A673 (cell line): ENCODE measurements at regions of chr6 and their contacts with region 1.

Region 1: GRCh38 chr6:30678964-30679726 is 6.3 kb upstream of the DHX16 start:
- DNase-seq: peak; percentile 89
- H3K4me3 ChIP-seq: no peak overlapping the region
- H3K27ac ChIP-seq: peak overlapping the region; percentile 43
- H3K4me1 ChIP-seq: peaks cover 23% of the 10 kb centered on the region
- H3K27me3 ChIP-seq: no peaks in the 10 kb centered on the region
- CTCF ChIP-seq: peak; percentile 97

Region 2: GRCh38 chr6:29447670-29448069 is 1231.5 kb before region 1 on chr6:
- CTCF ChIA-PET with region 1: no interaction called
- POLR2A ChIA-PET with region 1: no interaction called
- intact Hi-C with region 1: no loop called
- DNase-seq: peak; percentile 13
- H3K4me3 ChIP-seq: no peak overlapping the region
- H3K27ac ChIP-seq: no peak overlapping the region
- H3K4me1 ChIP-seq: no peaks in the 10 kb centered on the region
- H3K27me3 ChIP-seq: peaks cover 16% of the 10 kb centered on the region
- CTCF ChIP-seq: no peak

Region 3: GRCh38 chr6:30583921-30584320 is 95.2 kb before region 1 on chr6:
- CTCF ChIA-PET with region 1: no interaction called
- POLR2A ChIA-PET with region 1: no interaction called
- intact Hi-C with region 1: no loop called
- DNase-seq: no peak
- H3K4me3 ChIP-seq: no peak overlapping the region
- H3K27ac ChIP-seq: no peak overlapping the region
- H3K4me1 ChIP-seq: no peaks in the 10 kb centered on the region
- H3K27me3 ChIP-seq: no peaks in the 10 kb centered on the region
- CTCF ChIP-seq: no peak

Region 4: DNA sequence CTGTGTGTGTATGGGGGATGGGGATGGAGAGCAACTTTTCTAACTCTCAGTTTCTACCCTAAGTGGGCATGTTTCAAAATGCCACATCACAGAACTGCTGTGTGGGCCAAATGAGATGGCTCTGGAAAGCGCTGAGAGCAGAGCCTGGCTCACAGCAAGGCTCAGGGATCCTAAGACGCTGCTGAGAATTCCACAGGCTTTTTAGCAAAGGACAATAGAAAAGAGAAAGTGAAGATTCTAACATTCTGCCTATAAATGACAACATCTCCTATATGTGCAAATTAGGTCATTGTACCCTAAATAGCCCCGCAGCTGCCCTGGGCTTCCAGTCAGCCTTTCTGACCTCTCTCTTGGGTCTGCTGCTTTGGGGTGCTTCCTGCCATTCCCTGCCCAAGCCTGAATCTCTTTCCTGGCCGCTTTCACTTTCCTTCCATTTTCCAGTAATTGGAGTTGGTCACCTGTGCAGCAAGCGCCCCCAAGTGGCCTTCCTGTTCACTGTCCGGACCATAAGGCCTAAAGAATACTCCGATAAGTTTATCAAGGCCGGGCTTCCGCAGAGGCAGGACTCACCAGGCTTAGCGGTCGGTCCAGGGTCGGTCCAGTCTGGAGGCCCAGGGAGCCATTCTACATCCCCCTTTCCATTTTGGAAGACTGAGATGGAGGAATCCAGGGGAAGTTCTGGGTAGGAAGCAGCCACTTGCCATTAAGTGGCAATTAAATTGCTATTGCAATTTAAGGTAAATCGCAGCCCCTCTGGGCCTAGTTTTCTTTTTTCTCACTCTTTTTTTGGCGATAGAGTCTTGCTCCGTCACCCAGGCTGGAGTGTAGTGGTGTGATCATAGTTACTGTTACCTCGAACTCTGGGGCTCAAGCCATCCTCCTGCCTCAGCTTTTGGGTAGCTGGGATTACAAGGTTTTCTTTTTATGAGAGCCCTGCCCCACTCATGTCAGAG is 198.6 kb after region 1 on chr6:
- CTCF ChIA-PET with region 1: no interaction called
- POLR2A ChIA-PET with region 1: no interaction called
- intact Hi-C with region 1: loop called (anchors 1 kb)
- DNase-seq: peak; percentile 88
- H3K4me3 ChIP-seq: peak overlapping the region; percentile 31
- H3K27ac ChIP-seq: no peak overlapping the region
- H3K4me1 ChIP-seq: peaks cover 3% of the 10 kb centered on the region
- H3K27me3 ChIP-seq: no peaks in the 10 kb centered on the region
- CTCF ChIP-seq: peak; percentile 93

Region 5: GRCh38 chr6:30908700-30909099 is 229.6 kb after region 1 on chr6:
- CTCF ChIA-PET with region 1: interaction called, 4 read pairs
- POLR2A ChIA-PET with region 1: interaction called, 16 read pairs
- intact Hi-C with region 1: no loop called
- DNase-seq: no peak
- H3K4me3 ChIP-seq: peak overlapping the region; percentile 95
- H3K27ac ChIP-seq: peak overlapping the region; percentile 64
- H3K4me1 ChIP-seq: peaks cover 12% of the 10 kb centered on the region
- H3K27me3 ChIP-seq: no peaks in the 10 kb centered on the region
- CTCF ChIP-seq: no peak